ENCODE measurements at regions of chr2 and their contacts with region 1.

Region 1: DNA sequence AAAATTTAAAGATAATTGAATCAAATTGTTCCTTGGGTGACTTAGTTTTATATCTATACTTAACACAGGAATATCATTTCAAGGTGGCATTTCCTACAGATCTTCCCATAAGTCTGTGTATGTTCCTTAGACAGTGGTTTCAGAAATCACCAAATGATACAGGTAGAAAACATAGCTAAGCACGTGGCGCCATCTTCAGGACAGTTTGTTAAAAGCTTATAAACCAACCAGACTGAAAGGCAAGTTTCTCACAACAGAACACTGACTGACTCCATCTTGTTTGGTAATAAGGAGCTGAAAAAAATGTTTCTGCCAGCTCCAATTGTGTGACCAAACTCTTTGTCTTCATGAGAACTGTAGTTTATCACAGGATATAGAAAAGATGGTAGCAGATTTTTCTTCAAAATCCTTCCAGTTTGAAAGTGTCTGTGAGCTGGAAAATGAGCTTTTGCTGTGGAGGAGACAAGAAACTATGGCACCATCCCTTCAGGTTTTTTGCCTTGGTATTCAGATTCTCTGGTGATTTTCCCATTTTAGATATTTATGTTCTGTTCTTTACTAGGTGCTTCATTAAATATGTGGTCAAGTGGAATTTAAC is 34.8 kb upstream of the NEUROD1 start:
- DNase-seq: peak; percentile 52
- H3K4me3 ChIP-seq: no peak overlapping the region
- H3K27ac ChIP-seq: no peak overlapping the region
- H3K27me3 ChIP-seq: no peaks in the 10 kb centered on the region
- CTCF ChIP-seq: peak; percentile 72

Region 2: GRCh38 chr2:180125245-180125962 is 1589.7 kb before region 1 on chr2:
- CTCF ChIA-PET with region 1: interaction called, 74 read pairs
- POLR2A ChIA-PET with region 1: no interaction called
- DNase-seq: peak; percentile 94
- H3K4me3 ChIP-seq: no peak overlapping the region
- H3K27ac ChIP-seq: no peak overlapping the region
- H3K27me3 ChIP-seq: no peaks in the 10 kb centered on the region
- CTCF ChIP-seq: peak; percentile 76

Region 3: GRCh38 chr2:181411105-181411849 is 303.9 kb before region 1 on chr2:
- CTCF ChIA-PET with region 1: no interaction called
- POLR2A ChIA-PET with region 1: no interaction called
- DNase-seq: no peak
- H3K4me3 ChIP-seq: no peak overlapping the region
- H3K27ac ChIP-seq: no peak overlapping the region
- H3K27me3 ChIP-seq: no peaks in the 10 kb centered on the region
- CTCF ChIP-seq: no peak

Region 4: DNA sequence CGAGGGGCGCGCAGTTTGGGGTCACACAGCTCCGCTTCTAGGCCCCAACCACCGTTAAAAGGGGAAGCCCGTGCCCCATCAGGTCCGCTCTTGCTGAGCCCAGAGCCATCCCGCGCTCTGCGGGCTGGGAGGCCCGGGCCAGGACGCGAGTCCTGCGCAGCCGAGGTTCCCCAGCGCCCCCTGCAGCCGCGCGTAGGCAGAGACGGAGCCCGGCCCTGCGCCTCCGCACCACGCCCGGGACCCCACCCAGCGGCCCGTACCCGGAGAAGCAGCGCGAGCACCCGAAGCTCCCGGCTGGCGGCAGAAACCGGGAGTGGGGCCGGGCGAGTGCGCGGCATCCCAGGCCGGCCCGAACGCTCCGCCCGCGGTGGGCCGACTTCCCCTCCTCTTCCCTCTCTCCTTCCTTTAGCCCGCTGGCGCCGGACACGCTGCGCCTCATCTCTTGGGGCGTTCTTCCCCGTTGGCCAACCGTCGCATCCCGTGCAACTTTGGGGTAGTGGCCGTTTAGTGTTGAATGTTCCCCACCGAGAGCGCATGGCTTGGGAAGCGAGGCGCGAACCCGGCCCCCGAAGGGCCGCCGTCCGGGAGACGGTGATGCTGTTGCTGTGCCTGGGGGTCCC is 257.9 kb before region 1 on chr2 and contains the start of gene ITGA4:
- CTCF ChIA-PET with region 1: interaction called, 11 read pairs
- POLR2A ChIA-PET with region 1: no interaction called
- DNase-seq: peak; percentile 34
- H3K4me3 ChIP-seq: peak within 1 kb of the TSS; percentile 74
- H3K27ac ChIP-seq: peak within 1 kb of the TSS; percentile 31
- H3K27me3 ChIP-seq: no peaks in the 10 kb centered on the region
- CTCF ChIP-seq: peak; percentile 74
- polyA plus RNA-seq, gene ITGA4: 10.6 and 16.7 TPM in 2 replicates

Region 5: GRCh38 chr2:181656450-181657291 is 58.5 kb before region 1 on chr2 and contains the start of gene CERKL:
- CTCF ChIA-PET with region 1: interaction called, 10 read pairs
- POLR2A ChIA-PET with region 1: no interaction called
- DNase-seq: no peak
- H3K4me3 ChIP-seq: peak within 1 kb of the TSS; percentile 57
- H3K27ac ChIP-seq: no peak within 1 kb of the TSS
- H3K27me3 ChIP-seq: peaks cover 26% of the 10 kb centered on the region
- CTCF ChIP-seq: no peak
- polyA plus RNA-seq, gene CERKL: 0.09 TPM in 1 of 2 replicates, not detected in the other

Region 6: DNA sequence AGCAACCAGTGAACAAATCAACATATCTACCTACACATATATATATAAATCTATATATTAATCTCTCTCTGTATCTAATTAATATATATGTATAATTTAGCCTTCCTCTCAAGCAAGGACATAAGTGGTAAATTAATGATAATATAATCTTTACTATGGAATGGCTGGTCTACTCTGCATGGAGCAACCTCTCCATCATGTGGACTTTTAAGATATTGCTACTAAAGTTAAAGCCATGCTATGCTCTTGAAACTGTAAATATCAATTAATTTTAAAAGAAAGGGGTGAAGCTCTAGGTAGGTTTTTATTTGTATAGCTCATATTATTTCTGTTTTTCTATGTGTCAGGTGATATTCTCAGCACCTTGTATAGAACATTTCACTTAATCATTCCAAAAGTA is 417.5 kb after region 1 on chr2:
- CTCF ChIA-PET with region 1: interaction called, 25 read pairs
- POLR2A ChIA-PET with region 1: no interaction called
- DNase-seq: no peak
- H3K4me3 ChIP-seq: no peak overlapping the region
- H3K27ac ChIP-seq: no peak overlapping the region
- H3K27me3 ChIP-seq: no peaks in the 10 kb centered on the region
- CTCF ChIP-seq: peak; percentile 68

Measured in AG04450 (cell line).